Right lobe of liver (tissue), 6 donors: ENCODE measurements at regions of chr14 and their contacts with region 1.

Region 1: GRCh38 chr14:61247935-61248334 is 33.2 kb downstream of the TMEM30B start:
- DNase-seq: no peak
- ATAC-seq: no peak
- H3K4me3 ChIP-seq: no peak overlapping the region
- H3K27ac ChIP-seq: no peak overlapping the region
- H3K4me1 ChIP-seq: no peaks in the 10 kb centered on the region
- H3K27me3 ChIP-seq: no peaks in the 10 kb centered on the region
- CTCF ChIP-seq: no peak
- POLR2A ChIP-seq: no peak

Region 2: GRCh38 chr14:60622917-60623257 is 625.0 kb before region 1 on chr14:
- intact Hi-C with region 1: loop called in 1 of 2 experiments (anchors 10 kb)
- DNase-seq: no peak
- ATAC-seq: no peak
- H3K4me3 ChIP-seq: no peak overlapping the region
- H3K27ac ChIP-seq: no peak overlapping the region
- H3K4me1 ChIP-seq: peaks cover 0 to 5% (median 0%) of the 10 kb centered on the region in 4 donors
- H3K27me3 ChIP-seq: no peaks in the 10 kb centered on the region
- CTCF ChIP-seq: no peak
- POLR2A ChIP-seq: no peak